ENCODE measurements at regions of chr20 and their contacts with region 1.

Region 1: DNA sequence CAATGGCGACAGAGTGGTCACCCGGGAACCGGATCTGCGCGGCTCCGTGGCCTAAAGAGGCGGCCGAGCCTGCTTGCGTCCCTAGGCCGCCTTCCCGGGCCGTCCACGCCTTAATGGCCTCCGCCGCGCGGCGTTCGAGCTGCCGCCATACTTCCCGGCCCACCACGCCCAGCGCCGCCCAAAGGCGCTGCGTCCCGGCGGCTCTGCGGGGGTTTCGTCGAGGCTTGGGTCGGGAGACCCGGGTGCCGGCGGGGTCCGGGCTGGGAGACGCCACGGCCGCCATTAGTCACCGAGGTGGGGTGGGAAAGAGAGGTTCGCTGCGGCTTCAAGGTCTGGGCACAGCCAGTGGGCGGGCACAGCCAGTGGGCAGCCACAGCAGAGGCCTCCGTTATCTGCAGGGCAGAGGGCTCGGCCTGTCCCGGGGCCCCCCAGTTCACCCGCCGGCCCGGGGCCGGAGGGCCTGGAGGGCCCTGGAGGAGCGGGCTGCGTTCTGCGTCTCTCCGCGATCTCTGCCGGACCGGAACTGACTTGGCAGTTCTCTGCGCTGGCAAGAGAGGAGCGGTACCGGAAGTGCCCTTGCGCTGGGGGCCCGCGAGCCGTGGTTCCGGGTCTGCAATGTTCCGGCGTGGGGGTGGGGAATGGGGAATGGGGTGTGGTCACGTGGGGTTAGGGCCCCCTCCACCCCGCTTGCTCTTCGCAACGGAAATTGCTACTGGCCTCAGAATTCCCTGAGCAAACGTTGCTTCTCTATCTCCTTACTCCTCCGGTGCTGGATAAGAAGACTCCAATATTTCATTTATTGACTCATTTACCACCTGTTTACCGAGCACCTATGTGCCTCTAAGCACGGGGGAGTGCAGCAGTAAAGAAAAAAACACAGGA is 82.3 kb downstream of the CNBD2 start:
- DNase-seq: peak; percentile 87
- ATAC-seq: peak; percentile 95
- H3K4me3 ChIP-seq: peak overlapping the region; percentile 93
- H3K27ac ChIP-seq: peak overlapping the region; percentile 92
- H3K4me1 ChIP-seq: peaks cover 15% of the 10 kb centered on the region
- H3K27me3 ChIP-seq: no peaks in the 10 kb centered on the region
- CTCF ChIP-seq: no peak

Region 2: DNA sequence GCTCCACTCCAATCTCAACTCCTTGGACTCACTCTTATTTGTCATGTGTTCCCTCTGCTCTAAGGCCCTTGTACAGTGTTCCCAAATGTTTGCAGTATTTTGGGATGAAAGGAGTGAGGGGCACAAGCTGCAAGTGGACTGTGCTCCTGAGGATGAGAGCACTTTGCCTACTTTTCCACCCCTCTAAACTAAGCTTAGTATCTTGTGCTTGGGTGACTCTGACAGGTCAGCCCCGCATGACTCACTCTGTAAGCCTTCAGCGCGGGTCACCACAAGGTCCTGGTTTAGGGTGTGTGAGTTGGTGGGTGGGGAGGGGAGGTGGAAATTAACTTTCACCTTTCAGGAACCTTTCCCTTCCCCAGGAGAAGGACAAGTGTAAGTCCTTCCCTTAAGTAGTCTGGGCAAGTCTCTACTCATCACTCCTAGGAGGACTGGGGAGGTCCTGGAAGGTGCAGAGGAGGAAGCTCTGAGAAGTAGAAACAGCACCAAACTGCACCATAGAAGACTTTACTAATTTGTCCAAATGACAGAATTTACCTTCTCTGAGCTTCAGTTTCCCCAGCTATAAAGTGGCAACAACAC is 35.1 kb after region 1 on chr20:
- CTCF ChIA-PET with region 1: no interaction called
- POLR2A ChIA-PET with region 1: interaction called, 10 read pairs
- intact Hi-C with region 1: no loop called
- DNase-seq: peak; percentile 93
- ATAC-seq: peak; percentile 88
- H3K4me3 ChIP-seq: peak overlapping the region; percentile 54; the same call in 1 of the 2 replicates
- H3K27ac ChIP-seq: peak overlapping the region; percentile 98
- H3K4me1 ChIP-seq: peaks cover 55% of the 10 kb centered on the region
- H3K27me3 ChIP-seq: no peaks in the 10 kb centered on the region
- CTCF ChIP-seq: no peak

Region 3: GRCh38 chr20:36093025-36093803 is 42.5 kb after region 1 on chr20:
- CTCF ChIA-PET with region 1: no interaction called
- POLR2A ChIA-PET with region 1: no interaction called
- intact Hi-C with region 1: loop called (anchors 2 kb)
- DNase-seq: peak; percentile 52
- ATAC-seq: peak; percentile 64
- H3K4me3 ChIP-seq: peak overlapping the region; percentile 82
- H3K27ac ChIP-seq: peak overlapping the region; percentile 3; the same call in 1 of the 2 replicates
- H3K4me1 ChIP-seq: peaks cover 18% of the 10 kb centered on the region
- H3K27me3 ChIP-seq: no peaks in the 10 kb centered on the region
- CTCF ChIP-seq: no peak

Region 4: GRCh38 chr20:36132802-36133211 is 82.1 kb after region 1 on chr20:
- CTCF ChIA-PET with region 1: no interaction called
- POLR2A ChIA-PET with region 1: no interaction called
- intact Hi-C with region 1: loop called (anchors 1 kb)
- DNase-seq: no peak
- ATAC-seq: no peak
- H3K4me3 ChIP-seq: no peak overlapping the region
- H3K27ac ChIP-seq: no peak overlapping the region
- H3K4me1 ChIP-seq: peaks cover 11% of the 10 kb centered on the region
- H3K27me3 ChIP-seq: no peaks in the 10 kb centered on the region
- CTCF ChIP-seq: no peak

Measured in PC-3 (cell line).